IMR-90 (cell line): ENCODE measurements at regions of chr6 and their contacts with region 1.

Region 1: GRCh38 chr6:151067684-151068596 is 171.8 kb upstream of the AKAP12 start:
- DNase-seq: peak; percentile 97
- ATAC-seq: peak; percentile 72
- H3K4me3 ChIP-seq: no peak overlapping the region
- H3K27ac ChIP-seq: peak overlapping the region; percentile 90
- H3K4me1 ChIP-seq: peaks cover 24% of the 10 kb centered on the region
- H3K27me3 ChIP-seq: no peaks in the 10 kb centered on the region
- CTCF ChIP-seq: no peak
- POLR2A ChIP-seq: no peak; the same call in 1 of the 2 replicates
- RAD21 ChIP-seq: no peak; the same call in 1 of the 2 replicates

Region 2: DNA sequence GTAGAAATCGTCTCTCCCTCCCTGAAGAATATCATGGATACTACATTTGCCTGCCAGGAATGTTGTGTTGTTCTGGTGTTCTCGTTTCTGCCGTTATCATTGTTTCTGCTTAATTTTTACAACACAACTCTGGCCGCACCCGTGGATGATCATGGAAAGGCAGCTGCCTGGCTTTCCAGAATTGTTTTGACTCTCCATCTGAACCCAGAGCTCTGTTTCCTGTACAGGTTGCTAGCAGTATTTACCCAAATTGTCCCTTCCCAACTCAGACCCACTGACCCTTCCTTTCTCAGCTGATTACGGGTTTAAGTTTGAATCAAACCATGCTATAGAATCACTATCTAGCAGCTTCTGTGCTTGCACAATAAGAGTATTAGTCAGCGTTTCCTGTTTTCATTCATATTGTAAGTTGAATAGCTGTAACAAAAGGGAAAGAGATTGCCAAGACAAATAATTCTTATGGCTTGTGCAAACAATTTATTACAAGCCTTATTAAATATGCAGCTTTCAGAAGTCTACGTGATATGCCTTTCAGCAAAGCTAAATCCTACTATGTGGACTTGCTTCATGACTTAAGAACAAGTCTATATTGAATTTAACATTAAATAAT is 63.4 kb before region 1 on chr6:
- CTCF ChIA-PET with region 1: no interaction called
- POLR2A ChIA-PET with region 1: no interaction called
- dilution Hi-C with region 1: no loop called
- in situ Hi-C with region 1: no loop called
- intact Hi-C with region 1: no loop called
- DNase-seq: peak; percentile 95
- ATAC-seq: peak; percentile 61
- H3K4me3 ChIP-seq: no peak overlapping the region
- H3K27ac ChIP-seq: peak overlapping the region; percentile 55
- H3K4me1 ChIP-seq: peaks cover 25% of the 10 kb centered on the region
- H3K27me3 ChIP-seq: no peaks in the 10 kb centered on the region
- CTCF ChIP-seq: no peak
- POLR2A ChIP-seq: no peak
- RAD21 ChIP-seq: no peak

Region 3: GRCh38 chr6:151041686-151042085 is 26.3 kb before region 1 on chr6:
- CTCF ChIA-PET with region 1: no interaction called
- POLR2A ChIA-PET with region 1: no interaction called
- dilution Hi-C with region 1: no loop called
- in situ Hi-C with region 1: no loop called
- intact Hi-C with region 1: loop called (anchors 2 kb)
- DNase-seq: no peak
- ATAC-seq: no peak
- H3K4me3 ChIP-seq: no peak overlapping the region
- H3K27ac ChIP-seq: peak overlapping the region; percentile 85
- H3K4me1 ChIP-seq: peaks cover 33% of the 10 kb centered on the region
- H3K27me3 ChIP-seq: no peaks in the 10 kb centered on the region
- CTCF ChIP-seq: no peak
- POLR2A ChIP-seq: peak; percentile 64
- RAD21 ChIP-seq: no peak

Region 4: DNA sequence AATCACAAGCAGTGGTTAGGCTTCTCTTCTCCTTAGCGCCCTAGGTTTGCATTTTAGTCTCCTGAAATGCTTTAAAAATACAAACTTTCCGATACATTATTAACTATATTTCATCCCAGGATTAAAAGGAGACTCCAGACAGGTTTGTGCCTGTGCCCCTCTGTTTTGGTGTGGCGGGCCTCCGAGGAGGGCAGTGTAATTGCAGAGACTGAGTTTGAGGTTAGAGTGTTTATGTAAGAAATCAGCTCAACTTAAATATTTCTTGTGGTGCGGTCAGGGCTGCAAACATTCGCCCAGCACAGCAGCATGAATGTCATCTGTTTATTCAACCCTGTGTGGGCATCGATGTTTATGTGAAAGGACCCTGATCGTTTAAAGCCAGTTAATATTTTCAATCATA is 41.4 kb after region 1 on chr6:
- CTCF ChIA-PET with region 1: no interaction called
- POLR2A ChIA-PET with region 1: no interaction called
- dilution Hi-C with region 1: no loop called
- in situ Hi-C with region 1: no loop called
- intact Hi-C with region 1: loop called (anchors 2 kb)
- DNase-seq: peak; percentile 84
- ATAC-seq: peak; percentile 92
- H3K4me3 ChIP-seq: no peak overlapping the region
- H3K27ac ChIP-seq: no peak overlapping the region
- H3K4me1 ChIP-seq: peaks cover 9% of the 10 kb centered on the region
- H3K27me3 ChIP-seq: peaks cover 36% of the 10 kb centered on the region
- CTCF ChIP-seq: no peak
- POLR2A ChIP-seq: no peak
- RAD21 ChIP-seq: 0 out of 2 replicates have a peak, but pooled peaks have one; percentile 4

Region 5: DNA sequence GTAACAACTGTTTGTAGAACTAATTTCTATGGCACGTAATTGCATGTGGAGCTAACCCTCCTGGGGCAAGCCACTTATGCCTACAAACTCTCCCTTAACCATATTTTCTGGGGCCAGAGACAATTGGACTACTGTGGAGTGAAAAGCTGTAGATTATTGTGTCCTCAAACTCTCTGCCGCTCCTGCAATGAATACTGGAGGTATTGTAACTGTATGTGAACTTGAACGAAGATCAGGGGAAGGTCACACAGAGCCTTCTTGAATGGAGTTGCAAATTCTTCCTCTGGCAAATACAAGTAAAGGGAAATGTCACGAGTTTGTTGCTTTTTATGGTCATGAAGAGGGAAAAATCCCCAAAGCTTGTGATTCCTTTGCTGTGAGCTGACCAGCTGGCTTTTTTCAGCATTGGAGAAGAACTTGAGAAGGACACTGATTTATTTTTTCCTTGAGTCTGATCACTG is 190.1 kb after region 1 on chr6:
- CTCF ChIA-PET with region 1: no interaction called
- POLR2A ChIA-PET with region 1: no interaction called
- dilution Hi-C with region 1: no loop called
- in situ Hi-C with region 1: no loop called
- intact Hi-C with region 1: no loop called
- DNase-seq: peak; percentile 52
- ATAC-seq: peak; percentile 63
- H3K4me3 ChIP-seq: no peak overlapping the region
- H3K27ac ChIP-seq: peak overlapping the region; percentile 86; the same call in 1 of the 2 replicates
- H3K4me1 ChIP-seq: peaks cover 12% of the 10 kb centered on the region
- H3K27me3 ChIP-seq: no peaks in the 10 kb centered on the region
- CTCF ChIP-seq: no peak
- POLR2A ChIP-seq: no peak
- RAD21 ChIP-seq: no peak

Region 6: DNA sequence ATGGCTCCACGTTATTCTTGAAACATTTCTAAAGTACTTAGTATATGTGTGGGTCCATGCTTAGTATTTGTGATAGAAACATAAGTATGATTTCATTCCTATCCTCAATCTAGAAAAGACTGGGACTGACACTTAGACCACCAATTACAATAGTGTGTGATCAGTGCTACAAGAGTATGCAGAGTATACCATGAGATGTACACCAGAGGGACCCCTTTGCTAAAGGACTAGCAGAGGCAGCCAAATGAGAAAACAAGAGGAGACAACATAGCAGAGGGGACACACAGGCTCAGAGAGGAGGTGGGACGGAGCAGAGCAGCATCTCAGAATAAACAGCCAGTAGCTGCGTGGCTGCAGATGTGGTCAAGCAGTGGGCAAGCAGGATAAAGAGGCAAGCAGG is 362.9 kb after region 1 on chr6:
- CTCF ChIA-PET with region 1: no interaction called
- POLR2A ChIA-PET with region 1: no interaction called
- dilution Hi-C with region 1: no loop called
- in situ Hi-C with region 1: no loop called
- intact Hi-C with region 1: no loop called
- DNase-seq: no peak
- ATAC-seq: no peak
- H3K4me3 ChIP-seq: no peak overlapping the region
- H3K27ac ChIP-seq: no peak overlapping the region
- H3K4me1 ChIP-seq: no peaks in the 10 kb centered on the region
- H3K27me3 ChIP-seq: no peaks in the 10 kb centered on the region
- CTCF ChIP-seq: 0 out of 2 replicates have a peak, but pooled peaks have one; percentile 6
- POLR2A ChIP-seq: no peak
- RAD21 ChIP-seq: no peak